HCT116 (cell line): ENCODE measurements at regions of chrX and their contacts with region 1.

Region 1: GRCh38 chrX:114959729-114960128 is 57.7 kb downstream of the IL13RA2 start:
- DNase-seq: no peak
- ATAC-seq: no peak
- H3K4me3 ChIP-seq: no peak overlapping the region
- H3K27ac ChIP-seq: no peak overlapping the region
- H3K4me1 ChIP-seq: no peaks in the 10 kb centered on the region
- H3K27me3 ChIP-seq: no peaks in the 10 kb centered on the region
- CTCF ChIP-seq: peak; percentile 18 to 54 (median 22); a peak in 4 of 6 replicates
- POLR2A ChIP-seq: no peak
- RAD21 ChIP-seq: peak; percentile 54

Region 2: GRCh38 chrX:113929004-113929403 is 1030.7 kb before region 1 on chrX:
- CTCF ChIA-PET with region 1: interaction called, 3 read pairs
- POLR2A ChIA-PET with region 1: no interaction called
- RAD21 ChIA-PET with region 1: no interaction called
- intact Hi-C with region 1: loop called (anchors 5 kb)
- DNase-seq: peak; percentile 43
- ATAC-seq: peak; percentile 91
- H3K4me3 ChIP-seq: no peak overlapping the region
- H3K27ac ChIP-seq: no peak overlapping the region
- H3K4me1 ChIP-seq: no peaks in the 10 kb centered on the region
- H3K27me3 ChIP-seq: no peaks in the 10 kb centered on the region
- CTCF ChIP-seq: peak; percentile 36 to 69 (median 66); a peak in 5 of 6 replicates
- POLR2A ChIP-seq: no peak
- RAD21 ChIP-seq: peak; percentile 78

Region 3: GRCh38 chrX:114611018-114611619 is 348.6 kb before region 1 on chrX:
- CTCF ChIA-PET with region 1: interaction called, 6 read pairs
- POLR2A ChIA-PET with region 1: no interaction called
- RAD21 ChIA-PET with region 1: no interaction called
- intact Hi-C with region 1: loop called (anchors 5 kb)
- DNase-seq: peak; percentile 34
- ATAC-seq: peak; percentile 72
- H3K4me3 ChIP-seq: no peak overlapping the region
- H3K27ac ChIP-seq: no peak overlapping the region
- H3K4me1 ChIP-seq: no peaks in the 10 kb centered on the region
- H3K27me3 ChIP-seq: no peaks in the 10 kb centered on the region
- CTCF ChIP-seq: peak; percentile 16 to 67 (median 61); a peak in 5 of 6 replicates
- POLR2A ChIP-seq: no peak
- RAD21 ChIP-seq: peak; percentile 36; the same call in 1 of the 2 replicates

Region 4: GRCh38 chrX:114626323-114626722 is 333.4 kb before region 1 on chrX:
- CTCF ChIA-PET with region 1: interaction called, 24 read pairs
- POLR2A ChIA-PET with region 1: no interaction called
- RAD21 ChIA-PET with region 1: interaction called, 6 to 8 read pairs
- intact Hi-C with region 1: loop called (anchors 5 kb)
- DNase-seq: no peak
- ATAC-seq: no peak
- H3K4me3 ChIP-seq: no peak overlapping the region
- H3K27ac ChIP-seq: no peak overlapping the region
- H3K4me1 ChIP-seq: no peaks in the 10 kb centered on the region
- H3K27me3 ChIP-seq: no peaks in the 10 kb centered on the region
- CTCF ChIP-seq: peak; percentile 32 to 42 (median 36); a peak in 4 of 6 replicates
- POLR2A ChIP-seq: no peak
- RAD21 ChIP-seq: peak; percentile 38

Region 5: DNA sequence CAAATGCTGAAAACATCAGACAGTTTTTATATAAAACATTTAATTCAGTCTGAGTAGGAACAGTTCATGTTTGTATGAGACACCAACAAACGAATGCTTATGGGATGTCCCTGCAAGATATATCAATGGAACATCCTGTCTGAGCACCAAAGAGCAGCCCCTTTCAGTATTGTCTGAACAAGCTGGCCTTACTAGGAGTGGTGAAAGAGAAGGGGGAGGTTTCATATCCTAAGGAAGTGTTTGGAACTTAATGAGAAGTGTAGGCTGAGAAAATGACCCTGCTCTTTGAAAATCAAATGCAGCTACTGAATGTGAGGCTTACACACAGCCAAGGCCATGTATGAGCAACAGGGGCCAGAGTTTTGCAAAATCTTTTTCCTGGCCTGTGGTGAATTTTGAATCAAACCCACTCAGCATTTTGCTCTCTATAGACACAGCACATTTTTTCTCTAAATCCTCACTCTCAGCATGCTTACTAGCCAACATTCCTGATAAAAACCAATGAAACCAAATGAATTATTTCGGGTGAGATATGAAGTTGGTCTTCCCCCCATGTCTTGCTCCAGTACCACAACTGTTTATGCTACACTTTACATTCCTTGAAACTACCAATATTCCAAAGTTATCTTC is 449.2 kb after region 1 on chrX:
- CTCF ChIA-PET with region 1: no interaction called
- POLR2A ChIA-PET with region 1: no interaction called
- RAD21 ChIA-PET with region 1: no interaction called
- intact Hi-C with region 1: no loop called
- DNase-seq: no peak
- ATAC-seq: no peak
- H3K4me3 ChIP-seq: no peak overlapping the region
- H3K27ac ChIP-seq: no peak overlapping the region
- H3K4me1 ChIP-seq: no peaks in the 10 kb centered on the region
- H3K27me3 ChIP-seq: no peaks in the 10 kb centered on the region
- CTCF ChIP-seq: no peak
- POLR2A ChIP-seq: no peak
- RAD21 ChIP-seq: no peak